Prostate gland (tissue), 2 donors: ENCODE measurements at regions of chr4 and their contacts with region 1.

Region 1: DNA sequence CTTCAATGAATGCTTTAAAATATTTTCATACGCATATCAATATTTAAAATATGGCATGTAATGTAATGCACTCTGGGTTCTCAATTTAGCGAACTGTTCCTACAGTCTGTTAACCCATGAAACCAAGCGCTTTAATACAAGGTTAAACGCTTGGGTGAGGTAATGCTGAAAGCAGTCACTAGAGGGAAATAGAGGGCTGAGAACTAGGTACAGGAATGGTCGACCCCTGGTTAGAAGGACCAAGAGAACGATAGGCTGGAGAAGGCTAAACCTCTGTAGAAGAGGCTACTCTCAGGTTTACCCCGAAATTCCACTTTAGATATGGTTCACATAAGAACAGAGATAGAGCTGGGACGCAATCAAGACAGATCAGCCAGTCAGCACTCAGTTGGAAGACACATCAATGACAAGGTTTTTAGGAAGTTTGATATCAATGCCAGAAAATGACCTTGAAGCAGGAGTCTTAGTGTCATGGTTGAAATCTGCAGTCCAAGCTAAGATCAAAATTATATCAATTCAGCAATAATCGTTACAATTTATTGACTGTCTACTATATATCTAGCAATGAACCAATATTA is 26.9 kb downstream of the ARSJ start:
- DNase-seq: no peak
- H3K4me3 ChIP-seq: no peak overlapping the region
- H3K27ac ChIP-seq: no peak overlapping the region
- H3K4me1 ChIP-seq: no peaks in the 10 kb centered on the region
- H3K27me3 ChIP-seq: no peaks in the 10 kb centered on the region
- CTCF ChIP-seq: peak; percentile 19 to 60 (median 50)
- POLR2A ChIP-seq: no peak

Region 2: GRCh38 chr4:114378306-114378903 is 425.9 kb after region 1 on chr4:
- intact Hi-C with region 1: loop called (anchors 5 kb)
- DNase-seq: peak; percentile 22
- H3K4me3 ChIP-seq: no peak overlapping the region
- H3K27ac ChIP-seq: no peak overlapping the region
- H3K4me1 ChIP-seq: no peaks in the 10 kb centered on the region
- H3K27me3 ChIP-seq: no peaks in the 10 kb centered on the region
- CTCF ChIP-seq: peak in 2 of 4 experiments; percentile 51 to 54
- POLR2A ChIP-seq: no peak